ENCODE measurements at regions of chr2 and their contacts with region 1.

Region 1: DNA sequence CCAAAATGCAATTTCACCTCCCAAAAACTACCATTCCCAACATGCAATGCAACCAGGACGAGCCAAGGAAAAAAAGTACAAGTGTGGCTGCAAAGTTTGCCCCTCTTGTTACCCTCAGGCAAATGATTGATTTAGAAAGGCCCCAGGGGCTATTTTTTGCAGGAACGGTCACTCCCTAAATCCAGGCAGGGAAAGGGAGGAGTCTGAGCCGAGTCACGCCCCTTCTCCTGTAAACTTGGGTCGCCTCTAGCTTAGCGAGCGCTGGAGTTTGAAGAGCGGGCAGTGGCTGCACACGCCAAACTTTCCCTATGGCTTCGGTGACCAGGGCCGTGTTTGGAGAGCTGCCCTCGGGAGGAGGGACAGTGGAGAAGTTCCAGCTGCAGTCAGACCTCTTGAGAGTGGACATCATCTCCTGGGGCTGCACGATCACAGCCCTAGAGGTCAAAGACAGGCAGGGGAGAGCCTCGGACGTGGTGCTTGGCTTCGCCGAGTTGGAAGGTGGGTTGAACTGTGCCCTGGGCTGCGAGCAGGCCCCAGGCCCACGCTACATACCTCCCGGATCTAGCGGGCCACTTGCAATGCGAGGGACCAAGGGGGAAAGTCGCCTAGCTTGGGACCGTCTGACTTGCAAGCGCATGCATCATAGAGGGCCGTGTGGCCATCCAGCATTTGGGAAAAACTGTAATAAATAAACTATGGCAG is at the start of gene GALM:
- DNase-seq: peak in 2 of 3 donors; percentile 13 to 41
- H3K4me3 ChIP-seq: peak within 1 kb of the TSS; percentile 45 to 95 (median 66)
- H3K4me3 Mint-ChIP-seq: peak within 1 kb of the TSS; percentile 86 to 93
- H3K27ac ChIP-seq: peak within 1 kb of the TSS; percentile 42 to 68
- H3K27ac Mint-ChIP-seq: peak within 1 kb of the TSS; percentile 68 to 87 (median 82)
- H3K4me1 ChIP-seq: peaks cover 20 to 42% of the 10 kb centered on the region in 2 donors
- H3K4me1 Mint-ChIP-seq: peaks cover 35% of the 10 kb centered on the region
- H3K27me3 ChIP-seq: no peaks in the 10 kb centered on the region
- H3K27me3 Mint-ChIP-seq: peaks cover 0 to 2% (median 1%) of the 10 kb centered on the region in 3 donors
- CTCF ChIP-seq: peak; percentile 13
- polyA plus RNA-seq, gene GALM: 3.0 to 3.6 (median 3.1) TPM

Region 2: GRCh38 chr2:38370664-38371063 is 295.3 kb before region 1 on chr2:
- intact Hi-C with region 1: loop called in 1 of 2 experiments (anchors 5 kb)
- DNase-seq: no peak
- H3K4me3 ChIP-seq: no peak overlapping the region
- H3K4me3 Mint-ChIP-seq: no peak overlapping the region
- H3K27ac ChIP-seq: no peak overlapping the region
- H3K27ac Mint-ChIP-seq: peak overlapping the region in 1 of 7 donors; percentile 33
- H3K4me1 ChIP-seq: peaks cover 7 to 8% of the 10 kb centered on the region in 2 donors
- H3K4me1 Mint-ChIP-seq: peaks cover 18% of the 10 kb centered on the region
- H3K27me3 ChIP-seq: no peaks in the 10 kb centered on the region
- H3K27me3 Mint-ChIP-seq: no peaks in the 10 kb centered on the region
- CTCF ChIP-seq: no peak

Region 3: DNA sequence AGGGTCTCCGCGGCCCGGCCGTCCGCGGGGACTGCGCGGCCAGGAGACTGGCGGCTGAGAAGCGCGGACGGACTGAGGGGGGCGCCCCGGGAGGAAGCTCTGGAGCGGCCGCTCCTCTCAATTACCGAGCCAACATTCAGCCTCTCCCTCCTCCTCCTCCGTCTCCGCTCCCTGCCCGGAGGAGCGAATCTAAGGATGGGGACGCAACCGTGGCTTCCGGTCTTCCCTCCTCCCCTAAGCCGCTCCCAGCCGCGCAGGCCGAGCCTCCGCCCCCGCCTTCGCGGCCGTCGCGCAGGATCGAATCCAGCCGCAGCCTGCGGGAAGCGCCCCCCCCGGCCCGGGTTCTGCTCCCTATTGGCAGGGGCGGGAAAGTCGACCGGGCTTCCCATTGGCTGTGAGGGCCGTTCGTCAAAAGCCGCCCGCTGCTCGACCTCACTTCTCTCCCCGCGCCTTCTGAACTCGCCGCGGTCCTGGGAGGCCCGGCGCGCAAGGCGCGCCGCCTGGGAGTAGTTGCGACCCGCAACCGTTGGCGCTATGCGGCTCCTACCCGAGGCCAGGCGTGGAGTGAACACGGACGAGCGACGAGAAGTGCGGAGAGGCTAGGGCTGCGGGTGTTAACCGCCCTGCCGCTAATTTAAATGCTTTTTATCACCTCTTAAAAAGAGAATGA is 63.1 kb before region 1 on chr2 and contains the start of gene HNRNPLL:
- intact Hi-C with region 1: loop called (anchors 5 kb)
- DNase-seq: peak; percentile 87 to 93 (median 89)
- H3K4me3 ChIP-seq: peak within 1 kb of the TSS; percentile 63 to 89 (median 87)
- H3K4me3 Mint-ChIP-seq: peak within 1 kb of the TSS; percentile 87 to 91
- H3K27ac ChIP-seq: peak within 1 kb of the TSS; percentile 48 to 79
- H3K27ac Mint-ChIP-seq: peak within 1 kb of the TSS; percentile 86 to 93 (median 89)
- H3K4me1 ChIP-seq: peaks cover 45 to 64% of the 10 kb centered on the region in 2 donors
- H3K4me1 Mint-ChIP-seq: peaks cover 54% of the 10 kb centered on the region
- H3K27me3 ChIP-seq: no peaks in the 10 kb centered on the region
- H3K27me3 Mint-ChIP-seq: peaks cover 1 to 4% (median 3%) of the 10 kb centered on the region in 3 donors
- CTCF ChIP-seq: no peak
- polyA plus RNA-seq, gene HNRNPLL: 12.4 to 16.8 (median 13.8) TPM

Region 4: DNA sequence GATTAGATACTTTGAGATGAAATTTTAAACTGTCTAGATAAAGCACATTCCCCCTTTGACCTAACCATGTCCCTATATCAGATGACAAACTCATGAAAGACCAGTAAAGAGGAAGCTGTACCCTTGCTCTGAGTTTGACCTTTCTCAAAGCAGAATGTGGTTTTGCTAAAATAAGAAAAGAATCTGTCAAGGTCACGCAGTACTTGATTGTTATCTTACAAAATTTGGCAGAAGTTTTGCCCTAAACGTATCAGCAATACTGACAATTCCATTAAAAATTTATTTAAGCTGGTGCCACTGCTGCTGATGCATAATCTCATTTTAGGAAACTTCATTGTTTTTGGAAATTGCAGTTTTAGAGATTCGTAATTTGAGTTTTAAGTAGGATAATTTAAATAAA is 31.3 kb before region 1 on chr2:
- intact Hi-C with region 1: loop called in 1 of 2 experiments (anchors 5 kb)
- DNase-seq: peak; percentile 48 to 59 (median 56)
- H3K4me3 ChIP-seq: no peak overlapping the region
- H3K4me3 Mint-ChIP-seq: no peak overlapping the region
- H3K27ac ChIP-seq: no peak overlapping the region
- H3K27ac Mint-ChIP-seq: no peak overlapping the region
- H3K4me1 ChIP-seq: peaks cover 15 to 17% of the 10 kb centered on the region in 2 donors
- H3K4me1 Mint-ChIP-seq: peaks cover 19% of the 10 kb centered on the region
- H3K27me3 ChIP-seq: no peaks in the 10 kb centered on the region
- H3K27me3 Mint-ChIP-seq: peaks cover 0 to 6% (median 5%) of the 10 kb centered on the region in 3 donors
- CTCF ChIP-seq: no peak